Posterior vena cava (tissue), 2 donors: ENCODE measurements at regions of chr7 and their contacts with region 1.

Region 1: DNA sequence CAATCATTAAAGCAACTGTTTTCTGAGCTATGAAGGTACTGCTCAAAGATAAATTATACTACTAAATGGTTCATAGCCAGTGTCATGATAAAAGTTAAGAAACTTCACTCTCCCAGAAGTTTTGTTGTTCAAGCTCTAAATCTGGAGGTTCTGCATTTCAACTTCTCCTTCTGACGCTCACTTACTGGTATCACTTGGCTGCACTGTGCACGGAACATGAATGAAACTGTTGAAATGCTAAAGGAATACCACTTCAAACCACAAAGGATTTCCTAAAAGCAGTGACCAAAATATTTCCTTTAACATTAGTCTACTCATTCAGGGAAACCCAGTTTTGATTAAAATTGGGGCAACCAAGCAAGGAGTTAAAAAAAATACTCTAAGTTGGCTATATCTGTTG is 93.6 kb downstream of the UBE2H start:
- DNase-seq: no peak

Region 2: DNA sequence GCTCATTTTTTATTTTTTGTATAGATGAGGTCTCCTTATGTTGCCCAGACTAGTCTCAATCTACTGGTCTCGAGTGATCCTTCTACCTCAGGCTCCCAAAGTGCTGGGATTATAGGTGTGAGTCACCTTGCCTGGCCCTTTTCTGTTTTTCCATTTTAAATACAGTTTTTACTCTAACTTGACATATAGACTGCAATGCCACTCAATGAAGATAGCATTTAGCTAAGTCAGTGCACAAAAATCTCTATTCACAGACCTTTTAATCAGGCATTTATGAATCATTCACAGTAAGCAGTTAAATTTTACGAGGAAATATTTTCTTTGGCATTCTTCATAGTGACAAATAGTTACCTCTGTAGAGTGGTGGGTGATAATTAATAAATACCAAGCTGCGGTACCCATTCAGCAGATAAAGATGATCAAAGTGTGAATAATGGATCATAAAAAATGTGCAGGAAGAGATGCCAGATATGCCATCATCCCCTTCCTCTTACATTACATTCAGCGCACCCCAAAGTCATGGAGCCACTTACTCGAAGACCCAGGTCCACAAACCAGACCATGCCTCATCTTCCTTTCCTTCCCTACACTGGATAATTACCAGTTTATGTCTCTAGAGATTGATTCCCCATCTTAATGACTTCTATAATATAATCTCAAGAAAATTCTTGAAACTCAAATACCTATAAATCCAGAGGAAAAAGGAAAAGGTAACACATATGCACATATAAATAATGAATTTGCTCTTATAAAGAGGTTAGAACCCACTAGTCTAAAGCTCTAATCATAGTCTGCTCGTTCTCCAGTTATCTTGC is 37.6 kb after region 1 on chr7:
- intact Hi-C with region 1: no loop called
- DNase-seq: no peak

Region 3: DNA sequence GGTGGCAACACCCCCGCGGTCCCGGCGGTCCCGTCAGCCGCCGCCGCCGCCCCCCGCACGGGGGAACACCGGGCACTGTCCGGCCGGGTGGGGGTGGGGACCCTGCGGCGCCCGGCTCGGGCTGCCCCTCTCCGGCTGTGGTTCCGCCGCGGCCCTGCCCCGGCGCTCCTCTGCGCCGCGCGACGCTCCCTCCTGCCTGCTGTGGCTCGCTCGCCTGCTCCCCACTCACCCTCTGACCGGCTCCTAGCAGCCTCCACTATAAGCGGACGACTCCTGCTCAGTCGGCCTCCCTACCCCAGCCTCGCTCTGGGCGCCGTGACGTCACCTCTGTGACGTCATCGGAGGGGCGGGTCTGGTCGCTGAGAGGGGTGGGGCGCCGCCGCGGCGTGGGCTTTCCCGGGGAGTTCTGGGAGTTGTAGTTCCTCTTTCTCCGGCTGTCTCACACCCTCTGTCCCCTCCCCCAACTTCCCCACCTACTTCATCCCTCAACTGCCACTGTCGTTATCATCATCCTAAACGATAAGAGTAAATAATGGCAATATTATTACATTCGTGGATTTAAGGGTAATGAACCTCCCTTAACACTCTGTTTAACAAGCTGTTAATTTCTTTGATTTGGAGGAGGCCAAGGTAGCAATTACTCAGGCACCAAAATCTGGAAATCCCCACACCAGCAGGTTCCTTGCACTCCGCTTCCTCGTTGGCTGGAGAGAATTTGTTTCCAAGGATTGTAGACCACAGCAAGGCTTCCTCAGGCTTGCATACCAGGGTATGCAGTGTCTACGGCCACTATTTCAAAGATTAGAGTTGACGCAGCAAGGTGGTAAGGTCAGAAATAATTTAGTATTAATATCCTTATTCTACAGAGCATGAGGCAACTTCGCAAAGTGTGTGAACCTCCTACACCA is 93.7 kb after region 1 on chr7 and contains the start of gene UBE2H:
- intact Hi-C with region 1: loop called in 1 of 2 experiments (anchors 5 kb)
- DNase-seq: peak; percentile 97
- total RNA-seq, gene UBE2H: 77.0 to 138 TPM

Region 4: GRCh38 chr7:131151034-131151433 is 1291.9 kb after region 1 on chr7:
- intact Hi-C with region 1: loop called in 1 of 2 experiments (anchors 5 kb)
- DNase-seq: no peak